Activated naive CD8-positive, alpha-beta T cell treated with anti-CD3 and anti-CD28 coated beads, Interleukin-2, amount 10 ng/mL, durations not matched to agents 7 days and 5 days (primary cell): ENCODE measurements at regions of chr15 and their contacts with region 1.

Region 1: GRCh38 chr15:38647683-38648082 is 83.1 kb upstream of the RASGRP1 start:
- DNase-seq: no peak
- ATAC-seq: no peak
- H3K4me3 Mint-ChIP-seq: no peak overlapping the region
- H3K27ac Mint-ChIP-seq: no peak overlapping the region
- H3K4me1 Mint-ChIP-seq: peaks cover 67% of the 10 kb centered on the region
- H3K27me3 Mint-ChIP-seq: no peaks in the 10 kb centered on the region

Region 2: GRCh38 chr15:38610748-38611147 is 36.9 kb before region 1 on chr15:
- POLR2A ChIA-PET with region 1: interaction called, 51 read pairs
- DNase-seq: no peak
- ATAC-seq: peak; percentile 71
- H3K4me3 Mint-ChIP-seq: peak overlapping the region; percentile 80
- H3K27ac Mint-ChIP-seq: peak overlapping the region; percentile 97
- H3K4me1 Mint-ChIP-seq: peaks cover 64% of the 10 kb centered on the region
- H3K27me3 Mint-ChIP-seq: no peaks in the 10 kb centered on the region

Region 3: DNA sequence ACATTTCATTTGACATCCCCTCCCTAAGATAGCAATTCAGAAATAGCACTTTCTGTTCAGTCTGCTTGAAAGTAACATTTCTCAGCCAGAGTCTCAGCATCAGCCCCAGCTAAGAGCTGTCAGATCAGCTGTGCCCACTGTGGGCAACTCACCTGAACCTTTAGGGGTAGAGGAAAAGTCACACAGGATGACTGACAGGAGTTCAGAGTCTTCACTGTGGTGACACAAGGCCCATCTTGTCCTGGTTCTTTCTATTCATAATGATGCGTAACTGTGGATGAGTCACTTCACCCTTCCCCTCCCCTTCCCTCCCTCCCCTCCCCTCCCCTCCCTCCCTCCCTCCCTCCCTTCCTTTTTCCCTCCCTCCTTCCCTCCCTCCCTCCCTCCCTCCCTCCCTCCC is 13.1 kb after region 1 on chr15:
- POLR2A ChIA-PET with region 1: interaction called, 34 read pairs
- DNase-seq: no peak
- ATAC-seq: peak; percentile 68
- H3K4me3 Mint-ChIP-seq: peak overlapping the region; percentile 29
- H3K27ac Mint-ChIP-seq: peak overlapping the region; percentile 66
- H3K4me1 Mint-ChIP-seq: peaks cover 56% of the 10 kb centered on the region
- H3K27me3 Mint-ChIP-seq: no peaks in the 10 kb centered on the region

Region 4: GRCh38 chr15:38671675-38672254 is 24.1 kb after region 1 on chr15:
- POLR2A ChIA-PET with region 1: interaction called, 133 read pairs
- DNase-seq: peak; percentile 48
- ATAC-seq: peak; percentile 35
- H3K4me3 Mint-ChIP-seq: peak overlapping the region; percentile 77
- H3K27ac Mint-ChIP-seq: peak overlapping the region; percentile 94
- H3K4me1 Mint-ChIP-seq: peaks cover 73% of the 10 kb centered on the region
- H3K27me3 Mint-ChIP-seq: no peaks in the 10 kb centered on the region

Region 5: DNA sequence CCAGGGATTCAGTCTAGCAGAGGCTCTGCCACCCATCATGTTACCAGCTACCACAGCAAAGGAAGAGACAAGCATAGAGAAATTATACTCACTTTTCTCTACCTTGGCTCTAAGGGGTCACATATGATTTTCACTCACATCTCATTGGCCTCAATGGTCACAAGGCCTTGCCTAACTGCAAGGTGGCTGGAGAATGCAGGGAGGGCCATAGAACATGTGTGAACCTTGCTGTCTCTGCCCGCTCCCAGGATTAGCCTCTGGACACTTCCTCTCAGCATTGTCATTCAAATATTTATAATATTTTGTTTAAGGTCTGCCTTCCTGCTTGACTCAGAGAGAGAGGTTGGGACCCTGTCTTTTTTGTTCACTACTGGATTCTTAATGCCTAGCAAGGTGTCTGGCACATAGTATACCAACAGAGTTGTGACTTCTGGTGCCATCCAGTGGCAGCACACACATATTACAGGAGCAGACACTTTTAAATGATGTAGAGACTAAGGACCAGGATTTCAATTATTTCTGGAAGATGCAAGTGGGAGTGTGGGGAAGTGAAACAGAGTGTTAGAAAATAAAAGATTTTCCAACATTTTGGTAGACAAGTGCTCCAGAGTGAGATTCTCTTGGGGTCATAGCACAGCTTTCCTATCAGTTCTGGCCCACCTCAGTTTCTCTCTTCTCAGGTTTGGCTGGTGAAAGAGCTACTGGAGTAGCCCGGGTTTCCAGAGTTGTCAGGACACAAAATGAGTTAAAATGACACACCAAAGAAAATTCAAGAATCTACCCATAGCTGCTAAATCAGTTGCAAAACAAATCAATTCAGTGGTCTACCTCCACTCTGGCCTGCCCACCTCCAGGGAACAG is 35.9 kb after region 1 on chr15:
- POLR2A ChIA-PET with region 1: interaction called, 124 read pairs
- DNase-seq: peak; percentile 66
- ATAC-seq: peak; percentile 44
- H3K4me3 Mint-ChIP-seq: peak overlapping the region; percentile 74
- H3K27ac Mint-ChIP-seq: peak overlapping the region; percentile 95
- H3K4me1 Mint-ChIP-seq: peaks cover 62% of the 10 kb centered on the region
- H3K27me3 Mint-ChIP-seq: no peaks in the 10 kb centered on the region

Region 6: GRCh38 chr15:38690689-38691332 is 43.1 kb after region 1 on chr15:
- POLR2A ChIA-PET with region 1: interaction called, 124 read pairs
- DNase-seq: peak; percentile 71
- ATAC-seq: no peak
- H3K4me3 Mint-ChIP-seq: no peak overlapping the region
- H3K27ac Mint-ChIP-seq: peak overlapping the region; percentile 95
- H3K4me1 Mint-ChIP-seq: peaks cover 61% of the 10 kb centered on the region
- H3K27me3 Mint-ChIP-seq: no peaks in the 10 kb centered on the region